Thyroid gland (tissue), 4 donors: ENCODE measurements at regions of chr10 and their contacts with region 1.

Region 1: GRCh38 chr10:30534465-30535144 is 94.9 kb downstream of the LYZL2 start:
- DNase-seq: peak; percentile 74 to 76
- H3K4me3 ChIP-seq: no peak overlapping the region
- H3K27ac ChIP-seq: no peak overlapping the region
- H3K4me1 ChIP-seq: peaks cover 9 to 23% of the 10 kb centered on the region in 2 donors
- H3K27me3 ChIP-seq: no peaks in the 10 kb centered on the region
- CTCF ChIP-seq: peak; percentile 77 to 91 (median 84)
- POLR2A ChIP-seq: no peak

Region 2: GRCh38 chr10:29746080-29746797 is 788.4 kb before region 1 on chr10:
- intact Hi-C with region 1: no loop called
- DNase-seq: no peak
- H3K4me3 ChIP-seq: no peak overlapping the region
- H3K27ac ChIP-seq: no peak overlapping the region
- H3K4me1 ChIP-seq: peaks cover 4 to 6% of the 10 kb centered on the region in 2 donors
- H3K27me3 ChIP-seq: no peaks in the 10 kb centered on the region
- CTCF ChIP-seq: no peak
- POLR2A ChIP-seq: no peak

Region 3: DNA sequence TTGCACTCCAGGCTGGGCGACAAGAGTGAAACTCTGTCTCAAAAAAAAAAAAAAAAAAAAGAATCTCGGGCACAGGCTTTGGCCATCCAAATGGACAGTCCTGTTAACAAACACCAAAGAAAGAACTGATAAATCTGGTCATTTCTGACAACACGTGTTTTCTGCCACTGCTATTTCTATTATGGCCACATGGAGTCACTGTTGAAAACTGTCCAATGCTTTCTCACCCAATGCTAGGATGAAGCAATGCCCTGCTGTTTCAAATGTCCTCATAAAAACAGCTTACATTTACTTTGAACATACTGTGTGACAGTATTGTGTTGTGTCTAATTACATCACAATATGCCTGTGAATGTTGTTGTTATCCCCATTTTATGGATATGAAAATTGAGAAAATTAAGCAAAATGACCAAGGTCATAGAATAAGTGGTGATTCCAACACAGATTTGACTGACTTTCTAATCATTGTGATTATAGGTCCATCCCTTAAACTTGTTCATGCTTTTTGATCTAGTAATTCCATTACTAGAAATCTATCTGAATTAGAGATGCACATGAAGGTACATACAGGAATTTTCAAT is 120.5 kb before region 1 on chr10:
- intact Hi-C with region 1: loop called (anchors 5 kb)
- DNase-seq: peak in 1 of 2 donors; percentile 8
- H3K4me3 ChIP-seq: no peak overlapping the region
- H3K27ac ChIP-seq: no peak overlapping the region
- H3K4me1 ChIP-seq: peaks cover 0 to 8% of the 10 kb centered on the region in 2 donors
- H3K27me3 ChIP-seq: no peaks in the 10 kb centered on the region
- CTCF ChIP-seq: peak; percentile 56 to 95 (median 80)
- POLR2A ChIP-seq: no peak